Activated T-helper 1 cell treated with anti-CD3 and anti-CD28 coated beads, Interleukin-12 subunit alpha, Interleukin-12 subunit beta, Interleukin-2, Interleukin-4 antibody, amounts not matched to agents 30 ng/mL and 10 ng/mL and 1 ng/mL, durations not matched to agents 14 hours and 24 hours and 36 hours (primary cell): ENCODE measurements at regions of chr14 and their contacts with region 1.

Region 1: DNA sequence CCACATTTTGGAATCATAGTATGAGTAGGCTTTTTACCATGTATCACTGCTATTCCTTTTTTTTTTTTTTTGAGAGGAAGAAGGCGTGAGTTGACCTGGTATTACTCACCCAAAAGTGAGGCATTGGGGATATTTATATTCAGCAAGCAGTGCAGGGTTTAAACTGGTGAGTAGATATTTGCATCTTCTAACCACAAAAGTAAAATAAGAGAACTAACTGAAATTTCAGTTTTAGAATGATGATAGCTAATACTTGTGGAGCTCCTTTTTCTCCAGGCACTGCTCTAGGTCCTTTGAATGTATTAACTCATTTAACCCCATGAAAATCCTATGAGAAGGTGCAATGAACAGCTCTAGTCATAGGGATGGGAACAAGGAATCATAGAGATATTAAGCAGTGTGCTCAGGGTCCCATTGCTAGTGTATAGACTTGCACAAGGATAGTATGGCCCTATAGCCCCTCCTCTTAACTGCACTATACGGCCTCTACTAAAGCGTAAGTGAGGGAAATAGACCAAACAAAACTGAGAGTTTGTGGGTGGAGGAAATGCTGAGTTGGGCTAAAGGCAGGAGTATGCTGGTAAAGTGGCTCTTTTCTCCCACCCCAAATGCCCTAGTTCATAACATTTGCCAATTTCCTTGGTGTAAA is 104.3 kb upstream of the MAX start:
- DNase-seq: no peak
- H3K4me3 Mint-ChIP-seq: peak overlapping the region; percentile 72
- H3K27ac Mint-ChIP-seq: peak overlapping the region; percentile 92
- H3K4me1 Mint-ChIP-seq: peaks cover 70% of the 10 kb centered on the region
- H3K27me3 Mint-ChIP-seq: no peaks in the 10 kb centered on the region

Region 2: GRCh38 chr14:64997108-64997794 is 209.3 kb before region 1 on chr14:
- intact Hi-C with region 1: no loop called
- DNase-seq: no peak
- H3K4me3 Mint-ChIP-seq: no peak overlapping the region
- H3K27ac Mint-ChIP-seq: no peak overlapping the region
- H3K4me1 Mint-ChIP-seq: peaks cover 26% of the 10 kb centered on the region
- H3K27me3 Mint-ChIP-seq: no peaks in the 10 kb centered on the region

Region 3: GRCh38 chr14:65102441-65103149 is 104.0 kb before region 1 on chr14 and contains the start of gene MAX:
- intact Hi-C with region 1: loop called (anchors 2 kb)
- DNase-seq: peak; percentile 98
- H3K4me3 Mint-ChIP-seq: peak within 1 kb of the TSS; percentile 95
- H3K27ac Mint-ChIP-seq: peak within 1 kb of the TSS; percentile 95
- H3K4me1 Mint-ChIP-seq: peaks cover 33% of the 10 kb centered on the region
- H3K27me3 Mint-ChIP-seq: peaks cover 6% of the 10 kb centered on the region
- total RNA-seq, gene MAX: 135 and 137 TPM in 2 replicates

Region 4: GRCh38 chr14:65179918-65180724 is 26.5 kb before region 1 on chr14:
- intact Hi-C with region 1: loop called (anchors 1 kb)
- DNase-seq: peak; percentile 51
- H3K4me3 Mint-ChIP-seq: peak overlapping the region; percentile 52
- H3K27ac Mint-ChIP-seq: peak overlapping the region; percentile 86
- H3K4me1 Mint-ChIP-seq: peaks cover 43% of the 10 kb centered on the region
- H3K27me3 Mint-ChIP-seq: no peaks in the 10 kb centered on the region

Region 5: GRCh38 chr14:65302571-65303189 is 96.1 kb after region 1 on chr14:
- intact Hi-C with region 1: loop called (anchors 1 kb)
- DNase-seq: peak; percentile 56
- H3K4me3 Mint-ChIP-seq: peak overlapping the region; percentile 77
- H3K27ac Mint-ChIP-seq: peak overlapping the region; percentile 99
- H3K4me1 Mint-ChIP-seq: peaks cover 81% of the 10 kb centered on the region
- H3K27me3 Mint-ChIP-seq: no peaks in the 10 kb centered on the region

Region 6: DNA sequence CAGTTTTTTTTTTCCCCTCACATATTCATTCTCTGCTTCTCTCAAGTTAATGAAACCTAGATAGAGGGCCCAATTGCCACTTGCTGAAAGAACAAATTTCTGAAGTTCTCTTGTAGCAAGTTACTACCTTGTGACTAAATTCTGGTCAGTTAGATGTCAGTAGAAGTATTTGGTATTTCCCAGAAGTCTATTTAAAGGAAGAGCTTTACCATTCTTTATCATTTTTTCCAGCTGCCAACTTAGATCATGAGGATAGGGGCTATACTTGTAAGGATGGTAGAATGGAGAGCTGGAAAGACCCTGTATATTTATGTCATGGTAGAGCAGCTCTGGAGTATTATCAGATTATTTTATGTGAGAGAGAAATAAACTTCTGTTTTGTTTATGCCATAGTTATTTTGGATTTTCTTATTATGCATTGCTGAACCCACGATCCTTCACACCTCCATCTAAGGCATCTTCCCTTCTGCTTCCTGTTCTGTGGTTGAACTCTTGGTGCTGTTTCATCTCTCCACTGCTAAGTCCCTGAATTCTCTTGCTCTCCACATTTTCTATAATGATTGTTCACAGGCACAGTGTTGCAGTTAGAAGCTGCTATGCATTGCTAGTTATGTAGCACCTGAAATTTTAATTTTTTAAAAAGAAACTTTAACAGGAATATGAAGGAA is 231.8 kb after region 1 on chr14:
- intact Hi-C with region 1: loop called (anchors 2 kb)
- DNase-seq: no peak
- H3K4me3 Mint-ChIP-seq: peak overlapping the region; percentile 38
- H3K27ac Mint-ChIP-seq: peak overlapping the region; percentile 90
- H3K4me1 Mint-ChIP-seq: peaks cover 46% of the 10 kb centered on the region
- H3K27me3 Mint-ChIP-seq: no peaks in the 10 kb centered on the region

Region 7: DNA sequence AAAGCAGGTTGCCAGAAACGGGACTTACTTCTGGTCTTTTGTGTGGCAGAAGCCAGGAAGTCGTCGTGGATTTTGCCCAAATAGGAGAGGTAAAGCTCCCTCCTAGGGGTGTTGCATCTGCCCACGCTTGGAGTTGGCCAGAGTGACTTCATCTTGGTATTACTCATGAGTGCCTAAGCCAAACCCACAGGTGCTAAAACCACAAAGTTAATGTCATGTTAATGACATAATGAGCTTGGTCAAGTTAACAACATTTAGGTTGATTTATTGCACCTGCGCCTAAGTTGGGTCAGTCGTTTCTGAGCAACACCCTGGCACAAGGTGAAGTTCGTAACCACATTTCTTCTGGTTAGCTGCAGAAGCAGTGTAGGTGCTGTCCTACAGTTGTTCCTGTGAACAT is 431.2 kb after region 1 on chr14:
- intact Hi-C with region 1: loop called (anchors 2 kb)
- DNase-seq: peak; percentile 31
- H3K4me3 Mint-ChIP-seq: peak overlapping the region; percentile 34
- H3K27ac Mint-ChIP-seq: peak overlapping the region; percentile 79
- H3K4me1 Mint-ChIP-seq: peaks cover 49% of the 10 kb centered on the region
- H3K27me3 Mint-ChIP-seq: no peaks in the 10 kb centered on the region